CD8-positive, alpha-beta memory T cell (primary cell): ENCODE measurements at regions of chr17 and their contacts with region 1.

Region 1: GRCh38 chr17:50361561-50362480 is 11.2 kb downstream of the MRPL27 start:
- DNase-seq: peak; percentile 31 to 74 (median 51)
- H3K4me3 ChIP-seq: no peak overlapping the region
- H3K4me3 Mint-ChIP-seq: peak overlapping the region in 4 of 7 donors; percentile 9 to 48 (median 20)
- H3K27ac ChIP-seq: no peak overlapping the region
- H3K27ac Mint-ChIP-seq: peak overlapping the region; percentile 3 to 95 (median 66)
- H3K4me1 ChIP-seq: peaks cover 5% of the 10 kb centered on the region
- H3K4me1 Mint-ChIP-seq: peaks cover 9 to 15% (median 12%) of the 10 kb centered on the region in 3 donors
- H3K27me3 ChIP-seq: no peaks in the 10 kb centered on the region
- H3K27me3 Mint-ChIP-seq: no peaks in the 10 kb centered on the region

Region 2: DNA sequence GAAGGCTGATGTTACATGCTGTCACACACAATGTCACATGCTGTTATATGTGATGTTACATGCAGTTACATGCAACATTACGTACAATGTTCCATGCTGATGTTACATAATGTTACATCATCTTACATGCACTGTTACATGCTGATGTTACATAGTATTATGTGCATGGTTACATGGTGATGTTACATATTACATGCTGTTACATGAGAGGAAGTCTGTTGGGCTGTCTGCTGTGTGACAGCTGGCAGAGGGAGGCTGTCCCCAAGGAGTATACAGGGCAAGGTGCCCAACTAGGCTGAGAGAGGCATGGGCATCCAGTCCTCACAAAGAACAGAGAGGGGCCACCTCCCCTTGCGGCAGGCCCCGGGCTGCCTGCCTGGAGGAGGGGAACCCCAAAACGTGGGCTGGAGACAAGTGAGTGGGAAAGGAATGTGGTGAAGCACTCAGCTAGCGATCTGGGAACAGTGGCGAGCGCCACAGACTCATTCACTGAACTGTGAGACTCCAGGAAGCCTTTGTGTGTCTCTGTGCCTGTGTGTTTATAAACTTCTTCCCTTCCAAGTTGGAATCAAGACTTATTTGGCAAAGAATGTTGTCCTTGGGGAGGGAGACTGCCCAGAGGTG is 56.9 kb before region 1 on chr17:
- CTCF ChIA-PET with region 1: no interaction called
- POLR2A ChIA-PET with region 1: no interaction called
- DNase-seq: no peak
- H3K4me3 ChIP-seq: no peak overlapping the region
- H3K4me3 Mint-ChIP-seq: no peak overlapping the region
- H3K27ac ChIP-seq: no peak overlapping the region
- H3K27ac Mint-ChIP-seq: no peak overlapping the region
- H3K4me1 ChIP-seq: no peaks in the 10 kb centered on the region
- H3K4me1 Mint-ChIP-seq: no peaks in the 10 kb centered on the region
- H3K27me3 ChIP-seq: no peaks in the 10 kb centered on the region
- H3K27me3 Mint-ChIP-seq: peaks cover 8 to 49% of the 10 kb centered on the region in 2 donors

Region 3: DNA sequence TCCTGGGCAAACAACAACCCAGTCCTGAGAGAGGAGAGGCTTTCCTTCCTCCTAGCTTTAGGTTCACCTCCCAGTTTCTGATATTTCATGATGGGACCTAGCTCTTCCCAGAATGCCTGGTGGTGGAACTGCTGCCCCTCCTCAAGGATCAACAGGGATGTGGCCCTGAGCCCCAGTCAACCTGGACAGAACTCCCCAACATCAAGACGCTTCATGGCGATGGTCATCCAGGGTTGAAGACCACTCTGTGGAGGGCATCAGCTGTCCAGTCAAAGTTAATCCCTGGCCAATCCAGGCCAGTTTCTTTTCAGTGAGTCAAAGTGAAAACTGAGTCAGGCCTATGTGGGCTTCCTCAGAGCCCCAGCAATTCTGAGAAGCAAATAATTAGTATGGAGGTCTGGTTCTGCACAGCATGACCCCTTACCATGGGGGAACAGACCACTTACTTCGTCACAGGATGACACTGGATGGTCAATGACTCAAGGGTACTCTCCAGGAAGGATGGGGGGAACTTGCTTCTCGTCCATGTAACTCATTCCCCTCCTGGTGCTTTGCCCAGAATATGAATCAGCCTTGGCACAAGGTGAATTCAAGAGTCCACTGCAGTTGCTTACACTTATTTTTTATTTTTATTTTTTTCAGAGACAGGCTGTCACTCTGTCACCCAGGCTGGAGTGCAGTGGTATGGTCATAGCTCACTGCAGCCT is 30.6 kb before region 1 on chr17:
- CTCF ChIA-PET with region 1: no interaction called
- POLR2A ChIA-PET with region 1: no interaction called
- DNase-seq: no peak
- H3K4me3 ChIP-seq: no peak overlapping the region
- H3K4me3 Mint-ChIP-seq: no peak overlapping the region
- H3K27ac ChIP-seq: no peak overlapping the region
- H3K27ac Mint-ChIP-seq: no peak overlapping the region
- H3K4me1 ChIP-seq: no peaks in the 10 kb centered on the region
- H3K4me1 Mint-ChIP-seq: peaks cover 5 to 9% (median 8%) of the 10 kb centered on the region in 3 donors
- H3K27me3 ChIP-seq: no peaks in the 10 kb centered on the region
- H3K27me3 Mint-ChIP-seq: peaks cover 15 to 24% of the 10 kb centered on the region in 2 donors

Region 4: GRCh38 chr17:50345432-50346312 is 16.1 kb before region 1 on chr17 and contains the start of gene XYLT2:
- CTCF ChIA-PET with region 1: interaction called, 18 read pairs
- POLR2A ChIA-PET with region 1: interaction called, 12 read pairs
- DNase-seq: peak; percentile 88 to 94 (median 92)
- H3K4me3 ChIP-seq: peak within 1 kb of the TSS; percentile 82
- H3K4me3 Mint-ChIP-seq: peak within 1 kb of the TSS; percentile 87 to 97 (median 90)
- H3K27ac ChIP-seq: peak within 1 kb of the TSS; percentile 69
- H3K27ac Mint-ChIP-seq: peak within 1 kb of the TSS; percentile 84 to 95 (median 90)
- H3K4me1 ChIP-seq: peaks cover 22% of the 10 kb centered on the region
- H3K4me1 Mint-ChIP-seq: peaks cover 21 to 39% (median 30%) of the 10 kb centered on the region in 3 donors
- H3K27me3 ChIP-seq: no peaks in the 10 kb centered on the region
- H3K27me3 Mint-ChIP-seq: peaks cover 0 to 2% of the 10 kb centered on the region in 2 donors
- total RNA-seq, gene XYLT2: 31.8 to 32.6 TPM

Region 5: DNA sequence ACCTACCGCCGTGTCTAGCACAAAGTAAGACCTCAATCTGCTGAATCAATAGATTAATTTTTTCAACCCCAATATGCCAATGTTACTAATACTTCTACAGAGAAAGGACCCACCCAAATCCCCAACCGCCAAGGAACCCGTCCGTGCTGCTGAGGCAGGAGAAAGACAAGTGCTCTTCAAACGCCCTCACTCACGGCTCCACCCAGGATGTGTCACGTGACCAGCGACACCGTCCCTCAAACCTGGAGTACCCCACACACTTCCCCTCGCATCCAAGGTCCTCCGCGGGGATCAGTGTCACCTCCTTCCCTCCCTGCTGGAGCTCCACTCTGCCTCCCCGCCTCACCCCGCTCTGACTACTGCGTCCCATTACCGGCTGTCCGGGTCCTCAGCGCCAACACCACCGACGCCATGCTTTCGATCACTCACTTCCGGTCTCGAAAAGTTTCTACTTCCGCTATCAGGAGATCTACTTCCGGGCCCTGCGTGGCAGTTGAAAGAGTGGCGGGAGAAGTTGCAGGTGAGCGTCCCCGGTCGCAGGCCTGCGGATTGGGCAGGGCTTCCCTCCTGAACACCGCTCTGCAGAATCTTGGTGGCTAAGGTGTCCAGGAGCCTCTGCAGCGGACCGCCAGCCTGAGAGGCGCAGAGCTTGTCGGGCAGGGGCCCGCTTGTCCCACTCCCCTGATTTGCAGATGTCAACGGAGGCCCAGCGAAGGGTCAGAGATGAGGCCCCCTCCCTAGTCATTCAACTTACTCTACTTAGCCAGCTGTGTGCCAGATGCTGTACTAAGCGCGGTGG is 11.1 kb after region 1 on chr17 and contains the starts of genes EME1 and MRPL27:
- CTCF ChIA-PET with region 1: interaction called, 13 read pairs
- POLR2A ChIA-PET with region 1: interaction called, 5 read pairs
- DNase-seq: peak; percentile 76 to 91 (median 87)
- H3K4me3 ChIP-seq: peak within 1 kb of the TSS; percentile 100
- H3K4me3 Mint-ChIP-seq: peak within 1 kb of the TSS; percentile 90 to 99 (median 98)
- H3K27ac ChIP-seq: peak within 1 kb of the TSS; percentile 99
- H3K27ac Mint-ChIP-seq: peak within 1 kb of the TSS; percentile 91 to 100 (median 99)
- H3K4me1 ChIP-seq: peaks cover 24% of the 10 kb centered on the region
- H3K4me1 Mint-ChIP-seq: peaks cover 25 to 35% (median 26%) of the 10 kb centered on the region in 3 donors
- H3K27me3 ChIP-seq: no peaks in the 10 kb centered on the region
- H3K27me3 Mint-ChIP-seq: no peaks in the 10 kb centered on the region
- total RNA-seq, gene EME1: 23.6 to 24.8 TPM
- total RNA-seq, gene MRPL27: 87.2 to 88.8 TPM

Region 6: GRCh38 chr17:50425682-50426471 is 64.1 kb after region 1 on chr17 and contains the start of gene ACSF2:
- CTCF ChIA-PET with region 1: no interaction called
- POLR2A ChIA-PET with region 1: no interaction called
- DNase-seq: peak; percentile 50 to 82 (median 67)
- H3K4me3 ChIP-seq: peak within 1 kb of the TSS; percentile 58
- H3K4me3 Mint-ChIP-seq: peak within 1 kb of the TSS; percentile 86 to 93 (median 88)
- H3K27ac ChIP-seq: peak within 1 kb of the TSS; percentile 60
- H3K27ac Mint-ChIP-seq: peak within 1 kb of the TSS; percentile 58 to 96 (median 90)
- H3K4me1 ChIP-seq: peaks cover 33% of the 10 kb centered on the region
- H3K4me1 Mint-ChIP-seq: peaks cover 29 to 38% (median 35%) of the 10 kb centered on the region in 3 donors
- H3K27me3 ChIP-seq: no peaks in the 10 kb centered on the region
- H3K27me3 Mint-ChIP-seq: no peaks in the 10 kb centered on the region
- total RNA-seq, gene ACSF2: 12.4 to 14.8 TPM

Region 7: DNA sequence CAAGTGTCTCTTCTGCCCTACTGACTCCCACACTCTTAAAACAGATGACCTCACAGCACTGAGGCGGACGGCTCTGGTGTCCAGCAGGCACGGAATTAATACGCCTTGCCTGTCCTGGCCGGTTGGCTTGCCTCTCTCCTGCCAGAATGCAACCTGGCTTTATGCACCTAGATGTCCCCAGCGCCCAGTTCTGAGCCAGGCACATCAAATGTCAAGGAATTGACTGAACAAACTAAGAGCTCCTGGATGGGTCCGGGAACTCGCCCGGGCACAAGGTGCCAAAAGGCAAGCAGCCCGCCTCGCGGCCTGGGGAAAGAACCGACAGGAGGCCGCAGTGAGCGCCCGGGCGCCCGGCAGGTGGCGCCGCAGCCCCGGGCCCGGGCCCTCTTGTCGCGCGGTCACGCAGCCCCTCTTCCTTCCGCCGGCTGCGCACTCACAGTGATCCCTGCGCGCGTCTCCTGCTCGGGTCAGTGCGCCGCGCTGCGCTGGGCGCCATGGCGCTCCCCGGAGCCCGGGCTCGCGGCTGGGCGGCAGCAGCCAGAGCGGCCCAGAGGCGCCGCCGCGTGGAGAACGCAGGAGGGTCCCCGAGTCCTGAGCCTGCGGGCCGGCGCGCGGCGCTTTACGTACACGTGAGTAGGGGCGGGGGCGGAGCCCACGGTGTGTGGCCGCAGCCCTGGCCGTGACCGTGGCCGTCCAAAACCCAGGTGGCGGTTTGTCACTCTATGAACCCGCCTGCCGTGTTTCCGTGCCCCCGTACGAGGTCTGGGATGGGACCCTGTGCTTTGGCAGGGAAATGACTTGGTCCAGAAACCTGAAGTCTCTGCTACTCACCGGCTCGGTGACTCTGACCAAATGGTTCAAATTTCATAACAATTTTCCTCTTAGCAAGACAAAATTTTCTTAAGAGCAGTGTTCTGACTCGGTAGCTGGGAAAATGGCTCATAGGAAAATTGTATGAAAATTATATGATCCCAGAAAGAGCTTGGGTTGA is 116.9 kb after region 1 on chr17 and contains the start of gene RSAD1:
- CTCF ChIA-PET with region 1: interaction called, 14 read pairs
- POLR2A ChIA-PET with region 1: no interaction called
- DNase-seq: peak; percentile 77 to 89 (median 81)
- H3K4me3 ChIP-seq: peak within 1 kb of the TSS; percentile 97
- H3K4me3 Mint-ChIP-seq: peak within 1 kb of the TSS; percentile 86 to 96 (median 91)
- H3K27ac ChIP-seq: peak within 1 kb of the TSS; percentile 85
- H3K27ac Mint-ChIP-seq: peak within 1 kb of the TSS; percentile 81 to 99 (median 92)
- H3K4me1 ChIP-seq: peaks cover 16% of the 10 kb centered on the region
- H3K4me1 Mint-ChIP-seq: peaks cover 17 to 35% (median 32%) of the 10 kb centered on the region in 3 donors
- H3K27me3 ChIP-seq: no peaks in the 10 kb centered on the region
- H3K27me3 Mint-ChIP-seq: no peaks in the 10 kb centered on the region
- total RNA-seq, gene RSAD1: 45.7 to 46.8 TPM